ENCODE measurements at regions of chr18 and their contacts with region 1.

Region 1: DNA sequence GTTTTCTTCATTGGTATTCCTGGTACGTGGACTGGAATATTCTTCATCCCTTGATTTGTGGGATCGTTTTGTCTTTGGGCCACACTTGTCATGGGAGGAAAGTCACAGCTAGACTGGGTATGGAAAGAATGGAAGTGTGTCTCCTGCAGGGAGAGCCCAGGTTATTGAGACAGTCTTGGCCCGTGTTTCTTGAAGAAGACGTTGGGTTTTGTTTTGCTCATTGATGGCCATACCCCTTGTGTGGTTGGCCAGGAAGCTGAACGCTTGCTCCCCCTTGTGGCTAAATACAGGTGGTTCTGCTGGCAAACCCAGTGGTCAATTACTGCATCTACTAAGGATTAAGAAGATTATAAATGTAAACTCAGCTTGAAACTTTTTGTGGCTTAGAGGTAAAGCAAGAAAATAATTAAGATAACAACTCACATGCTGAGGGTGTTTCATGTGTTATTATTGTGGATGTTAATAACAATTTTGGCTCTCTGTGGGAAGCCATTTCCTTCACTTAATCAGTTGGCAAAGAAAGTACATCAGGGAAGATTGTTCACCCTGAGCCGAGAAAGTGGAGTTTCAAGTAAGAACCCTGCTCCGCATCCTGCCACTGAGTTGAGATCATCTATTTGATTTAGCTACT is 91.8 kb downstream of the NEDD4L start:
- DNase-seq: no peak
- H3K4me3 ChIP-seq: no peak overlapping the region
- H3K27ac ChIP-seq: no peak overlapping the region
- H3K4me1 ChIP-seq: peaks cover 0 to 4% (median 0%) of the 10 kb centered on the region in 4 donors
- H3K27me3 ChIP-seq: no peaks in the 10 kb centered on the region
- CTCF ChIP-seq: peak; percentile 38 to 79 (median 64)
- EP300 ChIP-seq: no peak
- POLR2A ChIP-seq: no peak

Region 2: GRCh38 chr18:58180738-58181353 is 45.0 kb after region 1 on chr18:
- intact Hi-C with region 1: loop called (anchors 5 kb)
- DNase-seq: no peak
- H3K4me3 ChIP-seq: no peak overlapping the region
- H3K27ac ChIP-seq: no peak overlapping the region
- H3K4me1 ChIP-seq: peaks cover 0 to 56% (median 39%) of the 10 kb centered on the region in 4 donors
- H3K27me3 ChIP-seq: no peaks in the 10 kb centered on the region
- CTCF ChIP-seq: peak; percentile 65 to 87 (median 76)
- EP300 ChIP-seq: no peak
- POLR2A ChIP-seq: no peak